Thyroid gland (tissue), 4 donors: ENCODE measurements at regions of chr1 and their contacts with region 1.

Region 1: DNA sequence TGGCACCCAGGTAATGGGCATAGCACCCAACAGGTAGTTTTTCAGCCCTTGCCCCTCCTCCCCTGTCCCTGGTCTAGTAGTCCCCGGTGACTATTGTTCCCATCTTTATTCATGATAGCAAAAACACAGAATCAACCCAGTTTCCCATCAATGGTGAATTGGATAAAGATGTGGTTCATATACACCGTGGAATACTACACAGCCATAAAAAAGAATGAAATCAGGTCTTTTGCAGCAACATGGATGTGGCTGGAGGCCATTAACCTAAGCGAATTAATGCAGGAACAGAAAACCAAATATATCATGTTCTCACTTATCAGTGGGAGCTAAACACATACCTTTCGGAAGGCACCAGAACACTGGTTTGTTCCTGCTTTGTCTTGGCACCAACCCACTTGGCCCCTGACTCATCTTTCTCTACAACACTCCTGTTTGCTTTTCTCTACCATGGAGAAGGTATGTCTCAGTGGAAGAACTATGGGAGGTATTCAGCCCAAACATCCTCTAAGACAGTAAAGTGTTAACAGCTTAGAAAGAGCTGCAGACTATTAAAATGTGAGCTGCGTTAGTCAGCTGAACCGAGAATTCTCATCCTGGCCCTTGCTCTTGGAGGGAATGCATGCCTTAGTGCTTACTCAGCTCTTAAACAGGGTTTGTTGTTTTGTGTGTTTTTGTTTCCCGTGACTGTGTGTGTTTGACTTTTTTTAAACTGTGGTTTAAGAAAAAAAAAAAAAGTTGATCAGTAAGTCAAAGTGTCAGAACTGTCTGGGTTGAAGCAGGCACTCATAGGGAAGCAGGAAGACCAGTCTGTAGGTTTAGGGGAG is 203.0 kb downstream of the TOMM20 start:
- DNase-seq: peak; percentile 58
- H3K4me3 ChIP-seq: no peak overlapping the region
- H3K27ac ChIP-seq: peak overlapping the region; percentile 77 to 87 (median 82)
- H3K4me1 ChIP-seq: peaks cover 47 to 52% of the 10 kb centered on the region in 2 donors
- H3K27me3 ChIP-seq: no peaks in the 10 kb centered on the region
- CTCF ChIP-seq: no peak
- POLR2A ChIP-seq: peak in 1 of 2 donors; percentile 44

Region 2: GRCh38 chr1:234709473-234710228 is 216.0 kb before region 1 on chr1:
- intact Hi-C with region 1: loop called (anchors 10 kb)
- DNase-seq: peak; percentile 97 to 98
- H3K4me3 ChIP-seq: no peak overlapping the region
- H3K27ac ChIP-seq: peak overlapping the region; percentile 93 to 96 (median 93)
- H3K4me1 ChIP-seq: peaks cover 36 to 52% of the 10 kb centered on the region in 2 donors
- H3K27me3 ChIP-seq: no peaks in the 10 kb centered on the region
- CTCF ChIP-seq: no peak
- POLR2A ChIP-seq: peak in 1 of 2 donors; percentile 78